ENCODE measurements at regions of chr3 and their contacts with region 1.

Region 1: DNA sequence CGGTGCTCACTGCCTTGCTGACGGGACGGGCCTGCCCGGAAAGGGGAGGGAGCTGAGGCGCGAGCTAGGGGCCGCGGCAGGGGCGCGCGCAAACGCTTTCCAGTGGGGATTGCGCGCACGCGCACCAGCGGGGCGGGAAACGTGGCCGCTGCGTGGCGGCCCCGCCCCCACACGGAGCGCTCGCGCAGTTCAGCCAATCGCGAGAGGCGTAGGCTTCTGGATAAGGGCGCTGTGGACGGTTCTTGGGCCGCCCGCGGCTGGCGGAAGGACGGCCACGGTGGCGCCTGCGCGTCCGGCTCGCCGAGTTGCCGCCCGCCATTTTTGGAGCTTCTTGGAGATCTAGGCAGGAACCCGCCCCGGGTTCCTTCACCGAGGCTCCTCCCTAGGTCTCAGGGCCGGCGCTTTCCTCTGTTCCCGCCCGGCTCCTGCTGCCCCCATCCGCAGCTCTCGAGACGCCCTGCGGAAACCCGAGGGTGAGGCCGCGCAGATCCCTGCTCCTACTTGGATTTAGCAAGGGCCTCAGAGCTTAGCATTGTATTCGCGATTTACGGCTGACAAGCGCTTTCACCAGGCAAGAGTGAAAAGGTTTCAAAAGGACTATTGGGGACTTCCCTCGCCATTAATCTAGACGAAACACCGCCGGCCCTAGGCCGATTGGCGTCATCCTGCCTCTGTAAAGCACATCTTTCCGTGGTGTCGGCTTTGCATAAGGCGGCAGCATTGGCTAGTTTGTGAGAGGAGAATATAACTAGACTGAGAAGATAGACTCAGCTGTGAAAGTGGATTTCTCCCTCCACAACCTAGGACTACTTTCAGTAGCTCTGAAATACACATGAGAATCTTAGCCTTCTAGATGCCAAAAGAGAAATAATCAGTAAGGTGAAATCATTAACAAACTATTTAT is 496 bp upstream of the STAG1 start:
- DNase-seq: peak; percentile 99
- ATAC-seq: peak; percentile 90
- H3K4me3 Mint-ChIP-seq: peak overlapping the region; percentile 73
- H3K27ac Mint-ChIP-seq: peak overlapping the region; percentile 95
- H3K4me1 Mint-ChIP-seq: peaks cover 42% of the 10 kb centered on the region
- H3K27me3 Mint-ChIP-seq: no peaks in the 10 kb centered on the region
- CTCF ChIP-seq: no peak

Region 2: DNA sequence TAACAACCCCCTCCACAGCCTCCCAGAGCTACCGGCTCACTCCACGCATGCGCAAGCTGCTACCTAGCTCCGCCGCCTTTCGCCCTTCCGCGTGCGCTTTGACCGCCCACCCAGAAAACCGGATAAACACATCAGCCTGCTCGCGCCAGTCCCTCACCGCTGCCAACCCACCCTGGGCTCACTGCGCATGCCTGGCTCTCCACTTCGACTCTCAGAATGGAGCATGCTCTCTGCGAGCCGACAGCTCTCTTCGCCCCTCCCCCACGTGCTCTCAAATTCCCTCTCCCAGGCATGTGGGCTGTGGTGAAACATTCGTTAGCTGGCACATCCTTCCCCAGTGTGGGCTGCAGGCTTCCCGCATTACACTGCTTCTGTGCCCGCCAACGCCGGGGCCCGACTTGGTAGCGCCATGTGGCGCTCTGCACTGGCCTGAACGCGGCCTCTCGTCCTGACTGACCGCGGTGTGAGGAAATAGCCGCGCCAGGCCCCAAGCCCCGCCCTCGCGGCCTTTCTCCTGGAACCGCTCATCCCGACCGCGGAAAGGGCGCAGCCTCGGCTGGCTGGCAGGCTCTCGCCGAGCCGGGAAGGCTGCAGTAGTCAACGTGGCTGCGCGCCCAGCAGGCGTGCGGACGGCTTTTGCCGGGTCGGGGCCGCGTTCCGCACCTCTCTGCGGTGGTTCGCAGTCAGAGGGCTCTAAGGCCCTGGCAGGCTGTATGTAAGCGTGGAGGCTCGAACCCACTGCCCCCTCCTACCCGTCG is 556.1 kb before region 1 on chr3:
- CTCF ChIA-PET with region 1: interaction called, 22 read pairs
- POLR2A ChIA-PET with region 1: interaction called, 14 read pairs
- DNase-seq: peak; percentile 98
- ATAC-seq: peak; percentile 79
- H3K4me3 Mint-ChIP-seq: peak overlapping the region; percentile 97
- H3K27ac Mint-ChIP-seq: peak overlapping the region; percentile 100
- H3K4me1 Mint-ChIP-seq: peaks cover 38% of the 10 kb centered on the region
- H3K27me3 Mint-ChIP-seq: peaks cover 2% of the 10 kb centered on the region; the same call in 1 of the 2 replicates
- CTCF ChIP-seq: no peak

Region 3: GRCh38 chr3:136390574-136390973 is 362.1 kb before region 1 on chr3:
- CTCF ChIA-PET with region 1: interaction called, 61 read pairs
- POLR2A ChIA-PET with region 1: interaction called, 4 read pairs
- DNase-seq: no peak
- ATAC-seq: no peak
- H3K4me3 Mint-ChIP-seq: no peak overlapping the region
- H3K27ac Mint-ChIP-seq: no peak overlapping the region
- H3K4me1 Mint-ChIP-seq: no peaks in the 10 kb centered on the region
- H3K27me3 Mint-ChIP-seq: no peaks in the 10 kb centered on the region
- CTCF ChIP-seq: no peak

Region 4: GRCh38 chr3:136545664-136546268 is 206.9 kb before region 1 on chr3:
- CTCF ChIA-PET with region 1: interaction called, 33 read pairs
- POLR2A ChIA-PET with region 1: interaction called, 7 read pairs
- DNase-seq: no peak
- ATAC-seq: no peak
- H3K4me3 Mint-ChIP-seq: no peak overlapping the region
- H3K27ac Mint-ChIP-seq: 0 out of 2 replicates have a peak overlapping the region, but pooled peaks have one; percentile 80
- H3K4me1 Mint-ChIP-seq: peaks cover 9% of the 10 kb centered on the region
- H3K27me3 Mint-ChIP-seq: no peaks in the 10 kb centered on the region
- CTCF ChIP-seq: no peak

Region 5: DNA sequence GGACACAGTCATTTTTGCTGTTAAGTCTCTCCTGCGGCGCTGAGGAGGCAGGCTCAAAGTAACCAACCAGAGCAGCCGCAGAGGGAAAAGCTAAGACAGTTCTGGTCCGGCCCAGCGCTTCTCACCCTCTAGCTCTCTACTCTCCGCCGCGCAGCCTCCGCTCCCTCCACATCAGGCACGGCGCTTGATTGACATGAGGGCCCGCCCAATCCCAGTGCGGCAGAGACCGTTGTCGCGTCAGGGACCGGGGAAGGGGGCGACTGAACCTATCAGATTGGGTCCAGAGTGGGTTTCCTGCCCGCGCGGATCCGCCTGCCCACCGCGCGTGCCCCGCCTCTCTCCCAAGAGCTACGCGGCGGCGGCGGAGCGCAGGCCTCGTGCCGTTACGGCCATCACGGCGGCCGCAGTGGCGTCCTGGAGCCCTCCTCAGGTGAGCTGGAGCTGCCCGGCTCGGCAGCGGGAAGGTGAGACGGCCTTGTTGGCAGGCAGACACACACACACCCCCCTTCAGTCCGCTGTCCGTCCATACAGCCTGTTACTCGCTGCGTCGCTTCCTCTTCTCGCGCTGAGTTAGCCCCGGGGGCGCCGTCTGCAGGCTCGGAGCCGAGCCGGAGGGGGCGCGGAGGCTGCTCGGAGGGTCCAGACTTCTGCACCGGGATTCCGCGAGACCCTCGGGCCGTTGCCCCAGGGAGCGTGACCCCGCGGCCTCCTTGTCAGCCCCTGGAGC is 109.4 kb after region 1 on chr3 and contains the start of gene NCK1:
- CTCF ChIA-PET with region 1: interaction called, 29 read pairs
- POLR2A ChIA-PET with region 1: interaction called, 19 read pairs
- DNase-seq: peak; percentile 97
- ATAC-seq: peak; percentile 96
- H3K4me3 Mint-ChIP-seq: peak within 1 kb of the TSS; percentile 94
- H3K27ac Mint-ChIP-seq: peak within 1 kb of the TSS; percentile 97
- H3K4me1 Mint-ChIP-seq: peaks cover 46% of the 10 kb centered on the region
- H3K27me3 Mint-ChIP-seq: no peaks in the 10 kb centered on the region
- CTCF ChIP-seq: no peak
- total RNA-seq, gene NCK1: 24.4 to 31.6 TPM (median 28.9 TPM) in 3 replicates

Region 6: DNA sequence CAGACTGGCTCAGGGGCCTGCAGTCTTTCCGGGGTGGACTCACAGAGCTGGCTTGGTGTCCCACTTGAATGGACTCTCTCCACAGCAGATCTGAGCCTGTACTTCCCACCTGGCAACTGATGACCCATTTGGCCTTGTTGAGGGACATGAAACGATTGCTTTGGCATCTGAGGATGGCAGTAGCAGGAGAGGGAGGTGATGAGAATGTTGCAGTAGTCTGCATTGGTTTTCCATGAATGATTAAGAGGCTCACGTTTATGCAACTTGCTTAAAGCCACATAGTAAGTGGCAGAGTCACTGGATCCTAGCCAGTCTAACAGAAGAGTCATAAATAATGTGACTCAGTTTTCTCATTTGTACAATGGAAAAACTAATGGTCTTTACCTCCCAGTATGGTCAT is 227.0 kb after region 1 on chr3:
- CTCF ChIA-PET with region 1: no interaction called
- POLR2A ChIA-PET with region 1: no interaction called
- DNase-seq: no peak
- ATAC-seq: no peak
- H3K4me3 Mint-ChIP-seq: no peak overlapping the region
- H3K27ac Mint-ChIP-seq: no peak overlapping the region
- H3K4me1 Mint-ChIP-seq: no peaks in the 10 kb centered on the region
- H3K27me3 Mint-ChIP-seq: no peaks in the 10 kb centered on the region
- CTCF ChIP-seq: no peak

Region 7: GRCh38 chr3:137032465-137033120 is 279.9 kb after region 1 on chr3:
- CTCF ChIA-PET with region 1: interaction called, 12 read pairs
- POLR2A ChIA-PET with region 1: no interaction called
- DNase-seq: peak; percentile 98
- ATAC-seq: peak; percentile 75
- H3K4me3 Mint-ChIP-seq: peak overlapping the region; percentile 70
- H3K27ac Mint-ChIP-seq: 0 out of 2 replicates have a peak overlapping the region, but pooled peaks have one; percentile 11
- H3K4me1 Mint-ChIP-seq: peaks cover 29% of the 10 kb centered on the region
- H3K27me3 Mint-ChIP-seq: peaks cover 30% of the 10 kb centered on the region
- CTCF ChIP-seq: peak; percentile 96